ENCODE measurements at regions of chr3 and their contacts with region 1.

Region 1: DNA sequence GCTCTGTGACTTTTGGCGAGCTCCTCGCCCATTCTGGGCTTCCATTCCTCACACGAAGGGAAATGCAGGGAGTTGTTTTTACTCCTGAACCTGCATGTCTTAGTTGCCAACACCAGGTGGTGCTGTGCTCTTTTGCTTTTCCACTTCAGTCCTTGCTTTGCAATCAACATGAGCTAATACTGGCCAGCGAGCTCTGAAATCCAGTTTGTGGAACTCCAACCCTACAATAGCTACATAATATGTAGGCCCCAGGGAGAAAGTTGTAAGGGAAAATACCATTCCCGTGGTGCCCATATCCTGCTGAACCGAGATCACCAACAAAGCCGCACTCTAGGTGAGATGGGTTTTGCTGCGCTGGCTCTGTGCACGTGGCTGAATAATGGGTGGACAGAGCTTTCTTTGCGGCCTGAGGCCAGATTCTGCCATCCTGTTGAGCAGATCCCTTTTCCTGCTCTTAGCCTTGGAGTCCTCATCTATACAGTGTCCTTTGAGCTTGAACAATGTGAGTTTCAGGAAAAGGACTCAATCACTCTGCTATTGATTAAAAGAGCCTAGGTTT is 25.0 kb downstream of the LSM3 start:
- DNase-seq: peak; percentile 40
- ATAC-seq: peak; percentile 80
- H3K4me3 ChIP-seq: no peak overlapping the region
- H3K27ac ChIP-seq: no peak overlapping the region
- H3K4me1 ChIP-seq: no peaks in the 10 kb centered on the region
- H3K27me3 ChIP-seq: no peaks in the 10 kb centered on the region
- CTCF ChIP-seq: peak; percentile 79 to 85 (median 83)
- POLR2A ChIP-seq: no peak
- RAD21 ChIP-seq: peak; percentile 89

Region 2: GRCh38 chr3:14178247-14179113 is 25.1 kb before region 1 on chr3 and contains the starts of genes LSM3 and XPC:
- CTCF ChIA-PET with region 1: interaction called, 13 read pairs
- POLR2A ChIA-PET with region 1: interaction called, 4 read pairs
- RAD21 ChIA-PET with region 1: no interaction called
- intact Hi-C with region 1: no loop called
- DNase-seq: peak; percentile 98
- ATAC-seq: peak; percentile 96
- H3K4me3 ChIP-seq: peak within 1 kb of the TSS; percentile 84 to 97
- H3K27ac ChIP-seq: peak within 1 kb of the TSS; percentile 86
- H3K4me1 ChIP-seq: peaks cover 10 to 14% of the 10 kb centered on the region in 2 experiments; a peak in 3 of 4 replicates
- H3K27me3 ChIP-seq: no peaks in the 10 kb centered on the region
- CTCF ChIP-seq: no peak
- POLR2A ChIP-seq: peak; percentile 58
- RAD21 ChIP-seq: no peak
- total RNA-seq, gene LSM3: 17.4 TPM
- total RNA-seq, gene XPC: 29.5 TPM

Region 3: GRCh38 chr3:14216257-14217048 is 12.9 kb after region 1 on chr3:
- CTCF ChIA-PET with region 1: interaction called, 20 read pairs
- POLR2A ChIA-PET with region 1: no interaction called
- RAD21 ChIA-PET with region 1: interaction called in 1 of 2 experiments, 3 read pairs
- intact Hi-C with region 1: no loop called
- DNase-seq: no peak
- ATAC-seq: peak; percentile 78
- H3K4me3 ChIP-seq: no peak overlapping the region
- H3K27ac ChIP-seq: no peak overlapping the region
- H3K4me1 ChIP-seq: no peaks in the 10 kb centered on the region
- H3K27me3 ChIP-seq: no peaks in the 10 kb centered on the region
- CTCF ChIP-seq: peak in 2 of 3 experiments; percentile 26 to 44; a peak in 4 of 6 replicates
- POLR2A ChIP-seq: no peak
- RAD21 ChIP-seq: no peak

Region 4: GRCh38 chr3:14231998-14232501 is 28.4 kb after region 1 on chr3:
- CTCF ChIA-PET with region 1: no interaction called
- POLR2A ChIA-PET with region 1: no interaction called
- RAD21 ChIA-PET with region 1: no interaction called
- intact Hi-C with region 1: no loop called
- DNase-seq: no peak
- ATAC-seq: no peak
- H3K4me3 ChIP-seq: no peak overlapping the region
- H3K27ac ChIP-seq: no peak overlapping the region
- H3K4me1 ChIP-seq: no peaks in the 10 kb centered on the region; a peak in 1 of 4 replicates
- H3K27me3 ChIP-seq: no peaks in the 10 kb centered on the region
- CTCF ChIP-seq: no peak
- POLR2A ChIP-seq: no peak
- RAD21 ChIP-seq: no peak

Region 5: DNA sequence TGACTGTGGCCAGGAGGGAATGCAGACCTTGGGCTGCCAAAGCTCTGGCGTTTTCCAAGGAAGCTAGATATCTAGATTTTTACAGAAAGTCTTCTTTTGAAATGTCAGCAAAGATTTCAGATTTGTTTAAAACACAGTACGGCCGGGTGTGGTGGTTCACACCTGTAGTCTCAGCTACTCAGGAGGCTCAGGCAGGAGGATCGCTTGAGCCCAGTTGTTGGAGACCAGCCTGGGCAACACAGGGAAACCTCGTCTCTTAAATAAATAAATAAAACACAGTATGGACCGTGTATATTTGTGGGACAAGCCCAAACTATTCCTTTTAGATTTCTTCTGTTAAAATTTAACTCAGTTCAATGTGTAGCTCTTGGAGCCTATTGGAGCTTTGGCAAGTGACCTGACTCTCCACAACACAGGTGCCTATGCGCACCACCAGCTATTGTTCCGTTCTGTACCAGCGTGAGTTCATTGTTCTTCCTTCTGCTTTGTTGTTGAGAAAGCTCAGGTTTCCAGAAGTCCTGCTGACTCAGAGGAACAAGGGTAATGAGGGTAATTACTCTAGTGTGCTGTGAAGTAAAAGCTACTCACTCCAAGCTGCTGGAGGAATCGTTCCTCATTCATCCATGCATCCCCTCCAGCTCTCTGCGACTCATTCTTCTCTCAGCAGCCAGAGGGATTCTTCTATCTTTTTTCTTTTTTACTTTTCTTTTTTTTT is 125.7 kb after region 1 on chr3:
- CTCF ChIA-PET with region 1: no interaction called
- POLR2A ChIA-PET with region 1: no interaction called
- RAD21 ChIA-PET with region 1: no interaction called
- intact Hi-C with region 1: no loop called
- DNase-seq: no peak
- ATAC-seq: peak; percentile 24; the same call in 1 of the 2 replicates
- H3K4me3 ChIP-seq: no peak overlapping the region
- H3K27ac ChIP-seq: no peak overlapping the region
- H3K4me1 ChIP-seq: peaks cover 4 to 32% of the 10 kb centered on the region in 2 experiments; a peak in 3 of 4 replicates
- H3K27me3 ChIP-seq: no peaks in the 10 kb centered on the region
- CTCF ChIP-seq: no peak
- POLR2A ChIP-seq: no peak
- RAD21 ChIP-seq: no peak

Region 6: GRCh38 chr3:14413381-14414071 is 209.9 kb after region 1 on chr3:
- CTCF ChIA-PET with region 1: no interaction called
- POLR2A ChIA-PET with region 1: no interaction called
- RAD21 ChIA-PET with region 1: no interaction called
- intact Hi-C with region 1: no loop called
- DNase-seq: no peak
- ATAC-seq: no peak
- H3K4me3 ChIP-seq: no peak overlapping the region
- H3K27ac ChIP-seq: no peak overlapping the region
- H3K4me1 ChIP-seq: peaks cover 3 to 25% of the 10 kb centered on the region in 2 experiments; a peak in 3 of 4 replicates
- H3K27me3 ChIP-seq: no peaks in the 10 kb centered on the region
- CTCF ChIP-seq: no peak
- POLR2A ChIP-seq: no peak
- RAD21 ChIP-seq: no peak

Region 7: GRCh38 chr3:14452679-14453367 is 249.2 kb after region 1 on chr3:
- CTCF ChIA-PET with region 1: interaction called, 11 read pairs
- POLR2A ChIA-PET with region 1: no interaction called
- RAD21 ChIA-PET with region 1: no interaction called
- intact Hi-C with region 1: no loop called
- DNase-seq: peak; percentile 73
- ATAC-seq: peak; percentile 85
- H3K4me3 ChIP-seq: peak overlapping the region in 1 of 2 experiments; percentile 27; a peak in 2 of 4 replicates
- H3K27ac ChIP-seq: peak overlapping the region; percentile 75
- H3K4me1 ChIP-seq: peaks cover 23 to 32% of the 10 kb centered on the region in 2 experiments
- H3K27me3 ChIP-seq: no peaks in the 10 kb centered on the region
- CTCF ChIP-seq: no peak
- POLR2A ChIP-seq: no peak
- RAD21 ChIP-seq: no peak

Region 8: DNA sequence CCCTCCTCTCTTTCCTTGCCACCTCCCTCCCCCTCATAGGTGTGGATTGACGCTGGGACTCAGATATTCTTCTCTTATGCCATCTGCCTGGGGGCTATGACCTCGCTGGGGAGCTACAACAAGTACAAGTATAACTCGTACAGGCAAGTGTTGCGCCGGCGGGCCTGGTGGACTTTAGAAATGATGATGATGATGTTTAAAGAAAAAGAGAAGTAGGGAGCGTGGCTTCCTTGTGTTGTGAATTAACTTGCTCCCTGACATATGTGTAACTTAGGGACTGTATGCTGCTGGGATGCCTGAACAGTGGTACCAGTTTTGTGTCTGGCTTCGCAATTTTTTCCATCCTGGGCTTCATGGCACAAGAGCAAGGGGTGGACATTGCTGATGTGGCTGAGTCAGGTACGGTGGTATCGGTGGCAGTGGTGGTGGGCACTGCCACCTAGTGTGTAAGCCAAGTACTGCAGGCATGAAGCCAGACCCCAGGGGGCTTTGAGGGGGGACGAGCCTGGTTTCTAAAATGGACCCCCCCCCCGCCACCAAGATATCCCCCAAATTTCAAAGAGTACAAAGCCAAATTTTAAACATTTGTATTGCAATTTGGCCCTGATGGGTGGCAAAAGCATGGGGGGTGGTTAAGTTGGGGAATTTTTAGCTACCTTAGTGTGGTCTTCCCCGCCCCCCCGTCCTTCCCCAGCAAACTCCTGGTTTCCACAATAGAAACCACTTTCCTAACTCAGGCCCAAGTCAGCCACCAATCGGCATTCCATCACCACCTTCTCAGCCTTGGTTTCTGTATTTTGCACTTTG is 264.4 kb after region 1 on chr3:
- CTCF ChIA-PET with region 1: interaction called, 30 read pairs
- POLR2A ChIA-PET with region 1: no interaction called
- RAD21 ChIA-PET with region 1: interaction called, 4 to 7 read pairs
- intact Hi-C with region 1: loop called (anchors 1 kb)
- DNase-seq: no peak
- ATAC-seq: peak; percentile 39
- H3K4me3 ChIP-seq: no peak overlapping the region
- H3K27ac ChIP-seq: no peak overlapping the region
- H3K4me1 ChIP-seq: peaks cover 13 to 19% of the 10 kb centered on the region in 2 experiments
- H3K27me3 ChIP-seq: no peaks in the 10 kb centered on the region
- CTCF ChIP-seq: peak; percentile 63 to 90 (median 89); a peak in 5 of 6 replicates
- POLR2A ChIP-seq: no peak
- RAD21 ChIP-seq: peak; percentile 87